A549 (cell line): ENCODE measurements at regions of chr11 and their contacts with region 1.

Region 1: DNA sequence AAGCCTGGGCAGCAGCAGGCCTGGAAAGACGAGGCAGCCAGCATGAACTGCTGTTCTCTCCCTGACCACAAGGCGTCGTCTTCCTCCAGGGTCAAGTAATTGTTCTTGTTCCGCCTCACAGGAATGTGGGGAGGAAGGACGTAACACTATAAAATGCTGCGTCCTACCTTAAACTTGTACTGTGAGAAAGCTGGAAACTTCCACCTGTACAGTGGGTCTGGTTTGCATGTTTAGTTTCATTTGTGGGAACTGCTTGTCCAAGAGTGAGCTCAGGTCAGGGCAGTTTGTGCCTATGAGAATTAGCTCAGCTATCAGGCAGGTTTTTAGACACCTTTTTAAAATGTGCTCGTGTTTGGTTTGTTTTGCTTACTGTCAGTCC is 55.2 kb downstream of the PANX1 start:
- DNase-seq: peak; percentile 30 to 73
- ATAC-seq: peak; percentile 64 to 91
- H3K4me3 ChIP-seq: no peak overlapping the region
- H3K27ac ChIP-seq: peak overlapping the region in 1 of 2 experiments; percentile 31; a peak in 1 of 6 replicates
- H3K4me1 ChIP-seq: peaks cover 5% of the 10 kb centered on the region; the same call in 1 of the 3 replicates
- CTCF ChIP-seq: peak; percentile 67
- EP300 ChIP-seq: no peak
- POLR2A ChIP-seq: no peak
- RAD21 ChIP-seq: peak; percentile 75 to 82

Region 2: DNA sequence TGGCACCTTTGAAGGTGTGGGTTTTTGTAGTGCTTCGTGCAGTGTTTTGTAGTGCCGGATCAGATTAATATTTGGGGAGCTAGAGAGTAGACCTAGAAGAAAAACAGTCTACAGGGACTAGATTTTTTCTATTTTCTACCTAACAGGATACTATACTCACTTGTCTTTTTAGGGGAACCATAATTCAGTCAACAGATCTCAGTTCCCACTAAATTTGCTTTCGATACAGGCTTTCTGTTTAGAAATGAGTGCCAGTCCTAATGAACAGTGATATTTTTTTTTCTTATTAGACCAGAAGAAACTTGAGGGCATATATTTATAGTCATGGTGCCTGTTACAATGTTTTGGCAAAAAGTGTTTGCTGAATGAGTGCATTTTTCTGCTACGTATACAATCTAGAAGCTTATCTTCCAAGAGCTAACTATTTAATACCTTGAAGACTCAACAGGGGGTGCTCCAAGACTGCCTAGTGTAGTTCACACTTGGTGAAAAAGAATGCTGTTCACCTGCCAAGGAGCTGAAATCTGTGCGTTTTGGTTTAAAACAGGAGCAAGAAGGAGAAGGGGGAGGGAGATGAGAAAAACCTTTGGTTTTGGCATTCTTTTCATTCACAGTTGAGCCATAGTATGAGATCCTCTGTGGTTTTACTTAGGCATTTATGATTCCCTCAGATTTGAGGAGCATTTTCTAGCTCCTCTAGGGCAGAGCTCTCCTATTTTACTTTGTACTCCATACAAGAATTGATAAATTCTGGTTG is 288.6 kb before region 1 on chr11:
- CTCF ChIA-PET with region 1: interaction called, 11 read pairs
- POLR2A ChIA-PET with region 1: no interaction called
- DNase-seq: peak in 1 of 2 experiments; percentile 53
- ATAC-seq: peak; percentile 77 to 83
- H3K4me3 ChIP-seq: no peak overlapping the region
- H3K27ac ChIP-seq: no peak overlapping the region
- H3K4me1 ChIP-seq: no peaks in the 10 kb centered on the region
- CTCF ChIP-seq: peak; percentile 65
- EP300 ChIP-seq: no peak
- POLR2A ChIP-seq: no peak
- RAD21 ChIP-seq: peak; percentile 78 to 85

Region 3: GRCh38 chr11:93921695-93922468 is 262.0 kb before region 1 on chr11:
- CTCF ChIA-PET with region 1: interaction called, 14 read pairs
- POLR2A ChIA-PET with region 1: no interaction called
- DNase-seq: peak; percentile 30 to 51
- ATAC-seq: peak; percentile 56 to 87; a peak in 4 of 6 replicates
- H3K4me3 ChIP-seq: no peak overlapping the region
- H3K27ac ChIP-seq: no peak overlapping the region
- H3K4me1 ChIP-seq: no peaks in the 10 kb centered on the region
- CTCF ChIP-seq: peak; percentile 44
- EP300 ChIP-seq: no peak
- POLR2A ChIP-seq: no peak
- RAD21 ChIP-seq: peak; percentile 52 to 75

Region 4: GRCh38 chr11:94171693-94172440 is 12.0 kb before region 1 on chr11:
- CTCF ChIA-PET with region 1: interaction called, 19 read pairs
- POLR2A ChIA-PET with region 1: no interaction called
- DNase-seq: peak; percentile 29 to 32
- ATAC-seq: peak; percentile 85 to 92; a peak in 5 of 6 replicates
- H3K4me3 ChIP-seq: no peak overlapping the region
- H3K27ac ChIP-seq: no peak overlapping the region
- H3K4me1 ChIP-seq: no peaks in the 10 kb centered on the region
- CTCF ChIP-seq: peak; percentile 64
- EP300 ChIP-seq: no peak
- POLR2A ChIP-seq: no peak
- RAD21 ChIP-seq: peak; percentile 65 to 74

Region 5: DNA sequence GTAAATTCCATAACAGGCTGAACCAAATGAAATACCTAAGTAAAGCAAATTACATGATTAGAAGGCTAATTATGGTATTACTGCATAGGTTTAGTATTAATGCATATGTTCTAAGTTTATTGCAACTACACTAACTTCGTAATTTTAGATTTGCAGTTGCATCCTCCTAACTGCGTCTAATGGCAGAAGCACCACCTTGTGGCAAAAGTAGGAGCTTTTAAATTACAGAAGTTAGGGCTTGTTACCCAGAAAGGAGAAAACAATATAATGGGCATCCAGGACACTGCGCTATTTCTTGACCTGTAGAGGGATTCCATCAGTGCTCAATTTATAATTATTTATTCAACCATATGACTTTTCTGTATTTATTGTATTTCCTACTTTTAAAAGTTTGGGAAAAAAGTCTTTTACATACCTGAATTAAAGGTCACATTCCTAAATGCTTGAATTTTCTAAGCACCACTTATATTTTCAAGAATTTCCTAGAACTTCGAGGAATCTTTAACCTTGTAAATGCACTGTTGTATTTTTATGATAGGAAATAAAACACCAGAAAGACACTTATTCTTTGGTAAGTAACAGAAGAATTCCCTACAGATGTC is 233.6 kb after region 1 on chr11:
- CTCF ChIA-PET with region 1: interaction called, 20 read pairs
- POLR2A ChIA-PET with region 1: no interaction called
- DNase-seq: peak in 1 of 2 experiments; percentile 28
- ATAC-seq: peak in 1 of 2 experiments; percentile 72; a peak in 2 of 6 replicates
- H3K4me3 ChIP-seq: no peak overlapping the region
- H3K27ac ChIP-seq: no peak overlapping the region
- H3K4me1 ChIP-seq: no peaks in the 10 kb centered on the region
- CTCF ChIP-seq: peak; percentile 55
- EP300 ChIP-seq: no peak
- POLR2A ChIP-seq: no peak
- RAD21 ChIP-seq: peak; percentile 59; a peak in 4 of 5 replicates